SK-N-SH (cell line): ENCODE measurements at regions of chr6 and their contacts with region 1.

Region 1: DNA sequence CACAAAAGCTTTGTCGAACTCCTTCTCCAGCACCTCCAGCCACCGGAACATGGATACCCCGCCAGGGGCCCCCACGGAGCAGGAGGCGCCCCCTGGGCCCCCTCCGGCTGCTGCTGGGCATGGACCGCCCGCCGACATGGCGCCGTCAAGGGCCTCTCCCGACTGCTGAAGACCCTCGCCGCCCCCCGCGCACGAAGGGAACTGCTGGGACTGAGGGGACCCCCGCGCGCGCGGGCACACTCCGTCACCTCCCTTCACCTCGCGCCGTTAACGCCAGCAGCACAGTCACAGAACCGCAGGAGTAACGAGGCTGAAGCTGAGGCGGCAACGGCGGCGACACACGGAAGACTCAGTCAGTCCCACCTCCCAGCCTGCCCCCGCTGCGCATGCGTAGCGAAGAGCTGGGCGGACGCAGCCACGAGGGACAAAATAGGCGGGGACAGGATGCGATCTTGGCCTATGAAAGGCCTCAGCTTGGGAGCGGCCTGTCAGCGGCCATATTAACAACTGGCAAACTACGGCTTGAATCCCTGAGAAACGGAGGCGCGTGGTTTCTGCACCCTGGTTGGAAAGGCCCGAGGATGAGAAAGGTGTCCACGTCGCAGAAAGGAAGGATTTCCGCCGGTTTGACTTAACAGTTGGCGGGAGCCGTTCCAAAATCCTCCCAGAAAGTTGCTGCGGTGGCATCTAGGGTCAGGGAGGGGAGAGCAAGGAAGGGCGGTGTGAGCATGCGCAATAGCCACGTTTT is at the start of gene GOPC:
- DNase-seq: peak; percentile 95
- H3K4me3 ChIP-seq: peak within 1 kb of the TSS; percentile 66 to 91
- H3K27ac ChIP-seq: peak within 1 kb of the TSS; percentile 86 to 99
- H3K4me1 ChIP-seq: peaks cover 0 to 11% of the 10 kb centered on the region in 2 experiments; a peak in 2 of 4 replicates
- H3K27me3 ChIP-seq: no peaks in the 10 kb centered on the region
- CTCF ChIP-seq: peak; percentile 32
- EP300 ChIP-seq: no peak
- RAD21 ChIP-seq: no peak
- polyA plus RNA-seq, gene GOPC: 20.8 and 31.4 TPM in 2 replicates

Region 2: GRCh38 chr6:117485433-117485832 is 116.9 kb before region 1 on chr6:
- CTCF ChIA-PET with region 1: no interaction called
- POLR2A ChIA-PET with region 1: no interaction called
- DNase-seq: no peak
- H3K4me3 ChIP-seq: peak overlapping the region; percentile 69 to 85; a peak in 3 of 4 replicates
- H3K27ac ChIP-seq: peak overlapping the region in 1 of 2 experiments; percentile 75; a peak in 2 of 4 replicates
- H3K4me1 ChIP-seq: peaks cover 4 to 7% of the 10 kb centered on the region in 2 experiments; a peak in 2 of 4 replicates
- H3K27me3 ChIP-seq: no peaks in the 10 kb centered on the region
- CTCF ChIP-seq: no peak
- EP300 ChIP-seq: no peak
- RAD21 ChIP-seq: no peak

Region 3: DNA sequence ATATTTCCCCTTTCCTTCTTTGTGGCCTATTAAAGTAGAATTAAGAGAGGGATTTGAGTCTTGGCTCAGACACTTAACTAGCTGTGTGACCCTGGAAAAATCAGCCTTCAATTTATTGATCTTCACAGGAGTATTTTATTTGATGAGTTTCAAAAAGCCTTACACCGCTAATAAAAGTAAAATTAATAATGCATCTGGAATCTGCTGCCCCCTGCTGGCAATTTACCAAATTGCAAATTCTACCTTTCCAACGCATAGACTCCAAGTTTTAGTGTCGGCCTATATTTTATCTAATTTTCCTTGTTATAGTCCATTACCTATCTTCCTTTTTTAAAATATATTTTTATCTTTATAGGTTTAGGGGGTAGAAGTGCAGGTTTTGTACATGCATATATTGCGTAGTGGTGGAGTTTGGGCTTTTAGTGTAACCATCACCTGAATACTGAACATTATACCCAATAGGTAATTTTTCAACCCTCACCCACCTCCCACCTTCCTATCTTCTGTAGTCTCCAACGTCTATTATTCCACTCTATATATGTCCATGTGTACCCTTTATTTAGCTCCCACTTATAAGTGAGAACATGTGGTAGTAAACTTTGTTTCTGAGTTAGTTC is 46.3 kb before region 1 on chr6:
- CTCF ChIA-PET with region 1: interaction called, 11 read pairs
- POLR2A ChIA-PET with region 1: interaction called, 3 read pairs
- DNase-seq: no peak
- H3K4me3 ChIP-seq: no peak overlapping the region; a peak in 1 of 4 replicates
- H3K27ac ChIP-seq: peak overlapping the region in 1 of 2 experiments; percentile 51; a peak in 3 of 4 replicates
- H3K4me1 ChIP-seq: peaks cover 0 to 7% of the 10 kb centered on the region in 2 experiments; a peak in 2 of 4 replicates
- H3K27me3 ChIP-seq: no peaks in the 10 kb centered on the region
- CTCF ChIP-seq: peak; percentile 90
- EP300 ChIP-seq: no peak
- RAD21 ChIP-seq: peak; percentile 69

Region 4: GRCh38 chr6:117591405-117591804 is 10.9 kb before region 1 on chr6:
- CTCF ChIA-PET with region 1: interaction called, 11 read pairs
- POLR2A ChIA-PET with region 1: no interaction called
- DNase-seq: no peak
- H3K4me3 ChIP-seq: no peak overlapping the region
- H3K27ac ChIP-seq: no peak overlapping the region
- H3K4me1 ChIP-seq: no peaks in the 10 kb centered on the region
- H3K27me3 ChIP-seq: no peaks in the 10 kb centered on the region
- CTCF ChIP-seq: no peak
- EP300 ChIP-seq: no peak
- RAD21 ChIP-seq: no peak

Region 5: DNA sequence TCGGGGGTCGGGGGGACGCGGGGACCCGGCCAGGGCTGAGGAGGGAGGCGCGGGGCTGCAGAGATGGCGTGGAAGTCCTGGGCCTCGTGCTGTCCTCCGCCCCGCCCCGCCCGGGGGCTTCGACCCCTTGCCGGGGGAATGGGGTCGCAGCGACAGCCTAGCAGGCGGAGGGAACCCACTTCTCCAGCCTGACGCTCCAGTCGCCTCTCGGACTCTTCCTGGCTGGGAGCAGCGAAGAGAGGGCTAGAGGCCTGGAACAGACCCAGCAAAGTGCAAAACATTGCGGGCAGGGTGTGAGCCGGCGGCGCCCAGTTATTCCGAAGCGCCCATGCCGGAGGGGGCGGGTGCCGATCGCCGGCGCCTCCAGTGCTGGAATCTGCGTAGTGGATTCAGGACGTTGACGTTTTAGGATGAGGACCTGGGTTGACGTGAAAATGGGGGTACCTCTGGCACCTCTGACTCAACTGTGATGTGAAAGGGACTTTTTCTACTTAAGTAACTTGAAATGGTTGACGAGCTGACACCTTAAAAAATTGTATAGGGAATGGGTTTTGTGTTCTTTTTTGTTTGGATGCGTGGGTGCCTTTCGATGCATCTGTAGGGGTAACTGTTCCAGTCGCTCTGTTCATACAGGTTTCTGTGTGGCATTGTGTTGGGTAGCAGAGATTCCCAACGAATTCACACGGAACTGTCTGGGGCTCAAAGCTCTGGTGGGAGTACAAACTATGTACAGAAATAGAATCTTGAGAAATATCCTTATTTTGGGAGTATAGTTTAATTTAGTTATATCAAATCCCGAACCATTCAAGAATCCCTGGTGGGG is 306.1 kb after region 1 on chr6:
- CTCF ChIA-PET with region 1: no interaction called
- POLR2A ChIA-PET with region 1: no interaction called
- DNase-seq: no peak
- H3K4me3 ChIP-seq: peak overlapping the region in 1 of 2 experiments; percentile 49; a peak in 1 of 4 replicates
- H3K27ac ChIP-seq: no peak overlapping the region
- H3K4me1 ChIP-seq: no peaks in the 10 kb centered on the region; a peak in 1 of 4 replicates
- H3K27me3 ChIP-seq: peaks cover 19% of the 10 kb centered on the region
- CTCF ChIP-seq: no peak
- EP300 ChIP-seq: no peak
- RAD21 ChIP-seq: no peak